ENCODE measurements at regions of chr5 and their contacts with region 1.

Region 1: DNA sequence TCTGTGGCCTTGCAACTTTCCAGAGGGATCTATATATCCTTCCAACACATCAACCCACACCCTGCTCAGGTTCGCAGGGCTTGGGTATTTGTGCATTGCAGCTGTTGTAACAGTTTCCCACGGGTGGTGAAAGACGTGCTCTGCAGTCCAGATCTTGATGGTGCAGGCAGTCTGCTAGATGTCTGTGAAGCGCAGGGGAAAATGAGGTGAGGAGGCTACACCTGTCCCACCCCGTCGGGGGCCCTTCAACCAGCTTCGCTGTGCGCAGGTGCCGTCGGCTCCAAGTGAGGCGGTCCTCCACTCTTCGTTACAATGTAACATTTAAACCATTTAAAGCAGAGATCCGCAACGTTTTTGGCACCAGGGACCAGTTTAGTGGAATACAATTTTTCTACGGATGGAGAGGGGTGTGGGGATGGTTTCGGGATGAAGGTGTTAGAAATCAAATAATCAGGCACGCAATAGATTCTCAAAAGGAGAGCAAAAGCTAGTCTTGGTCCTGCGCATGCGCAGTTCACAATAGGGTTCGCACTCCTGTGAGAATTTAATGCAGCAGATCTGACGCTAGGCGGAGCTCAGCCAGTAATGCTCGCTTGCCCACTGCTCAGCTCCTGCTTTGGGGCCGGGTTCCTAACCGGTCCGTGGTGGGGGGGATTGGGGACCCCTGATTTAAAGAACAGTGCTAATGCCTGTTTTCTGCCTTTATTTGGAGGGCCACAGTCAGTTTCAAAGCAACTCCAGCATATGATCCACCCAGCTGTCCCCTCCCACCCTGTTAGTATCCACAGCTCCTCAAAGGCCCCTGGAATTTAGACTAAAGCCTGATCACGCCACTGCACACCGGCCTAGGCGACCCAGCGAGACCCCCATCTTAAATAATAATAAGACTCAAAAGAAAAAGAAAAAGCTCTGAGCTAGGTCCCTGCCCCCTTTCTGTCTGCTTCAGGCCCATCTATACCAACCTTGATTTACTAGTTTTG is 97.1 kb upstream of the SELENOP start:
- DNase-seq: peak; percentile 89 to 90 (median 89)
- H3K4me3 ChIP-seq: peak overlapping the region; percentile 40 to 56
- H3K4me3 Mint-ChIP-seq: peak overlapping the region; percentile 88 to 97 (median 93)
- H3K27ac ChIP-seq: peak overlapping the region; percentile 44
- H3K27ac Mint-ChIP-seq: peak overlapping the region; percentile 66 to 97 (median 95)
- H3K4me1 ChIP-seq: peaks cover 7% of the 10 kb centered on the region
- H3K4me1 Mint-ChIP-seq: peaks cover 8 to 18% (median 12%) of the 10 kb centered on the region in 4 donors
- H3K27me3 ChIP-seq: no peaks in the 10 kb centered on the region
- H3K27me3 Mint-ChIP-seq: peaks cover 10% of the 10 kb centered on the region in 2 donors

Region 2: GRCh38 chr5:42807722-42808447 is 100.9 kb before region 1 on chr5:
- CTCF ChIA-PET with region 1: no interaction called
- POLR2A ChIA-PET with region 1: no interaction called
- intact Hi-C with region 1: no loop called
- DNase-seq: no peak
- H3K4me3 ChIP-seq: no peak overlapping the region
- H3K4me3 Mint-ChIP-seq: no peak overlapping the region
- H3K27ac ChIP-seq: no peak overlapping the region
- H3K27ac Mint-ChIP-seq: no peak overlapping the region
- H3K4me1 ChIP-seq: no peaks in the 10 kb centered on the region
- H3K4me1 Mint-ChIP-seq: peaks cover 0 to 12% (median 3%) of the 10 kb centered on the region in 4 donors
- H3K27me3 ChIP-seq: no peaks in the 10 kb centered on the region
- H3K27me3 Mint-ChIP-seq: peaks cover 0 to 1% of the 10 kb centered on the region in 2 donors

Region 3: DNA sequence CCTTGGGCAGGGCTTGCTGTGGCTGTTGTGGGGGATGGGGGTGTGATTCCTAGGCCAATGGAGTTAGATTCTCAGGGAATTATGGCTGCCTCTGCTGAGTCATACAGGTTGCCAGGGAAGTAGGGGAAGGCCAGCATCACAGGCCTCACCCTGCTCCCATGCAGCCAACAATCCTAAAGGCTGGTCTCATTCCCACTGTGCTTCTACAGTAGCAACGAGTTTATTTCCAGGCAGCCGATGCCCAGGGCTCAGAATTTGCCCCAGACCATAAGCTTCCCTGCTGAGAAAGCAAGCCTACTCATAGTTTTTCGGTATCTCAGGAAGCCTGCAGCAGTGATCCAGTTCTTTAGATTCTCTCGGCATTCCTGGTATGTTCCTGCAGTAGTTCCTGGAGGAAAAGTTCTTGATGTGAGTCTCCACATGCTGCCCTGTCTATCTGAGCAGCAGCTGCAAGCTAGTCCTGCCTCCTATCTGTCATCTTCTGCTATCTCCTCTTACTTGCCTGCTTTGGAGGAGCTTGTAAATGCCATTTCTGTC is 37.8 kb before region 1 on chr5:
- CTCF ChIA-PET with region 1: no interaction called
- POLR2A ChIA-PET with region 1: no interaction called
- intact Hi-C with region 1: no loop called
- DNase-seq: no peak
- H3K4me3 ChIP-seq: no peak overlapping the region
- H3K4me3 Mint-ChIP-seq: no peak overlapping the region
- H3K27ac ChIP-seq: no peak overlapping the region
- H3K27ac Mint-ChIP-seq: no peak overlapping the region
- H3K4me1 ChIP-seq: peaks cover 7% of the 10 kb centered on the region
- H3K4me1 Mint-ChIP-seq: peaks cover 0 to 7% (median 3%) of the 10 kb centered on the region in 4 donors
- H3K27me3 ChIP-seq: no peaks in the 10 kb centered on the region
- H3K27me3 Mint-ChIP-seq: peaks cover 14 to 22% of the 10 kb centered on the region in 2 donors

Region 4: DNA sequence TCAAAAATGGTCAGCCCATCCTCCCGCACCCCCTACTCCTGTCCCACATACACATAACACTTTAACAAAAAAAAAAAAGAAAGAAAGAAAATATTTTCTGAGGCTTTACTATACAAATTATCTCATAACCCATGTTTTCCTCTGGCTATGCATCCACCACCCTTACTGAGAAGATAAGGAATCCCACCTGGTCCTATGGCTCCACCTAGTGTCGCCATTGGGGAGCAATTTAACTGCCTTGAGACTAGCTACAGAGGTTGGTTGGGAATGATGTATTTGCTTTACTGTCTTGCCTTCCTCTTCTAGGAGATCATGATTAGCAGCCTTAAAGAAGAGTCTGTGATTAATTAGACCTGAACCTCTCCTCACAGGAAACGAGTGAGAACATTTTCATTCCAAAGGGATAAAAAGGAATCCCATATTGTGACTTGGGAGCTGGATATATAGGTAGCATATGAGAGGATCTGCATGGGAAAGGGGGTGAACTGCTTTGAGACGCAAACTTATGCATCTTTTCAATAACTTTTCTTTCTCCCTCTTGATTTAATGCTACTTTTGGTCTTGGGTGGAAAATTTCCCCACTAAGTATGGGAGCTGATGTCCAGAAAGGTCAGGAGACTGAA is 19.4 kb before region 1 on chr5:
- CTCF ChIA-PET with region 1: interaction called, 15 read pairs
- POLR2A ChIA-PET with region 1: interaction called, 4 read pairs
- intact Hi-C with region 1: no loop called
- DNase-seq: peak in 4 of 5 donors; percentile 48 to 54 (median 51)
- H3K4me3 ChIP-seq: no peak overlapping the region
- H3K4me3 Mint-ChIP-seq: no peak overlapping the region
- H3K27ac ChIP-seq: no peak overlapping the region
- H3K27ac Mint-ChIP-seq: no peak overlapping the region
- H3K4me1 ChIP-seq: no peaks in the 10 kb centered on the region
- H3K4me1 Mint-ChIP-seq: no peaks in the 10 kb centered on the region
- H3K27me3 ChIP-seq: no peaks in the 10 kb centered on the region
- H3K27me3 Mint-ChIP-seq: peaks cover 7 to 8% of the 10 kb centered on the region in 2 donors

Region 5: DNA sequence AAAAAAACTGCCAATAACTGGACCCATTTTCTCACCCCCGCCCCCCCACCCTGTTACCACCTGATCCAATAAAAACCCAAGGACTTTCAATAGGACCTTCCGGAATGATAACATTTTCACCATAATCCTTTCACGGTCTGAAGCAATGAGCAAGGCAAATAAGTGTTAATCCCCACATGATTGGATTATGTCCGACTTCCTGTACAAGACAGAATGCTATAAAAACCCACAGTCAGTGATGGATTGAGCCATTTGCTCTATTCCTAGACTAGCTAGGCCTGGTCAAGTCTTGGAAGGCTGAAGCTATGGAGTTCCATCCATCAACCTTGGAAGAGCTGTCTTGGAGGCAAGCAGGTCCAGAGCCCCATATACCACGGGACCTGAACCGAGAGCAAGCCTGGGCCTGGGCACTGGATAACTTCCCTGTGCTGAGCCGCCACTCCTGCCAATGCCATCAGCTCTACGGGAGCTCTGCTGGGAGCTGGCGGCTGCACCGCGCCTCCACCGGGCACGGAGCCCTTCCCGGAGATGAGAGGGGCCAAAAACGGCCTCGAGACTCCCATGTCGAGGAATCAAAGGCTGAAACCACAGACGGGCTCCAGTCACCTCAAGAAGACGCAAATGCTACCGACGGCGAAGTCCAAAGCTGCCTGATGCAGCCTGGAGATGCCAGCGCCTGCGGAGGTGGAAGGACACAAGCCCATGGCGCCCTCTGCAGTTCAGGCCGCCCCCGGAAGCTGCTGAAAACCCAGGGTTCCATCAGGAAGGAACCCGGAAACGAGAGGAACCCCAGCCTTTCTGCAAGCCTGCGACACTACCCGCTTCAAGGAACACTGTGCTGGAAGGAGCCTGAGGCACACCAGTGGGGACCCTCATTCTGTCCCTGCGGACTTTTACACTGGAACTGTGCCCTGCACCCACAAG is 62.1 kb after region 1 on chr5:
- CTCF ChIA-PET with region 1: interaction called, 10 read pairs
- POLR2A ChIA-PET with region 1: no interaction called
- intact Hi-C with region 1: no loop called
- DNase-seq: no peak
- H3K4me3 ChIP-seq: no peak overlapping the region
- H3K4me3 Mint-ChIP-seq: no peak overlapping the region
- H3K27ac ChIP-seq: no peak overlapping the region
- H3K27ac Mint-ChIP-seq: peak overlapping the region in 2 of 7 donors; percentile 35 to 61
- H3K4me1 ChIP-seq: peaks cover 3% of the 10 kb centered on the region
- H3K4me1 Mint-ChIP-seq: peaks cover 5 to 7% (median 6%) of the 10 kb centered on the region in 4 donors
- H3K27me3 ChIP-seq: no peaks in the 10 kb centered on the region
- H3K27me3 Mint-ChIP-seq: no peaks in the 10 kb centered on the region

Region 6: DNA sequence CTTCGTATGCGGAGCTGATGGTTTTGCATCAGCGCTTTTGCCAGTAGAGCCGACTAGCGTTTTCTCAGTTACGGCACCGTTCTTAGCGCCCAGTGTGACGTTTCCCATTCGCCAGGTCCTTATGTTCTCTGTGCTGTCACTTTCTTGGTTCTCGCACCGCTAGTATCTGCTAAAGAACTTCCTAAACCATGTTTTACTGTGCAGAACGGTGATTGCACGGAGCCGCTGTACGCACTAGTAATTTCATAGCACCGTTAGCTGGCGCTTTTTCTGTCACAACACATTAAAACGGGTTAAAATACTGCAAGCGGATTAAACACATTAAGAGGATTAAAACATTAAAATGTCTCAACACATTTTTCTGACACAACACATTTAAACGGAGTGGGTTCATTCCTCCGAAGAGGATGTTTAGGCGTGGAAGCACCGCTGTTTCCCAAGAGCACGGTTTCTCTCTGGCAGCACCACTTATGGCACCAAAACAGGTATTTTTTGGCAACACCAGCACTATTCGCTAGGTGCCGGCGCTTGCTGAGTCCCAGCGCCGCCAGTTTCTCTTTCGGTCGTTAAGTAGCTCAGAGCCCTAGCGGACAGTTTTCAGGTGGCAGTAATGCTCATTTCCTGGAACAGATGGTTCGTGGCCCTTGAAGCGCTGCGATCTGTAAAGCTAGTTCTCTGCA is 111.0 kb after region 1 on chr5:
- CTCF ChIA-PET with region 1: interaction called, 86 read pairs
- POLR2A ChIA-PET with region 1: interaction called, 65 read pairs
- intact Hi-C with region 1: loop called (anchors 1 kb)
- DNase-seq: peak; percentile 84 to 94 (median 91)
- H3K4me3 ChIP-seq: peak overlapping the region; percentile 73 to 83
- H3K4me3 Mint-ChIP-seq: peak overlapping the region; percentile 94 to 99 (median 98)
- H3K27ac ChIP-seq: peak overlapping the region; percentile 94
- H3K27ac Mint-ChIP-seq: peak overlapping the region; percentile 99 to 100 (median 100)
- H3K4me1 ChIP-seq: peaks cover 40% of the 10 kb centered on the region
- H3K4me1 Mint-ChIP-seq: peaks cover 24 to 67% (median 34%) of the 10 kb centered on the region in 4 donors
- H3K27me3 ChIP-seq: no peaks in the 10 kb centered on the region
- H3K27me3 Mint-ChIP-seq: no peaks in the 10 kb centered on the region

Region 7: GRCh38 chr5:43066799-43067741 is 158.3 kb after region 1 on chr5:
- CTCF ChIA-PET with region 1: interaction called, 33 read pairs
- POLR2A ChIA-PET with region 1: interaction called, 96 read pairs
- intact Hi-C with region 1: loop called (anchors 1 kb)
- DNase-seq: peak; percentile 88 to 92 (median 90)
- H3K4me3 ChIP-seq: peak overlapping the region; percentile 97 to 99
- H3K4me3 Mint-ChIP-seq: peak overlapping the region; percentile 97 to 100 (median 98)
- H3K27ac ChIP-seq: peak overlapping the region; percentile 94
- H3K27ac Mint-ChIP-seq: peak overlapping the region; percentile 98 to 100 (median 99)
- H3K4me1 ChIP-seq: peaks cover 46% of the 10 kb centered on the region
- H3K4me1 Mint-ChIP-seq: peaks cover 31 to 59% (median 43%) of the 10 kb centered on the region in 4 donors
- H3K27me3 ChIP-seq: no peaks in the 10 kb centered on the region
- H3K27me3 Mint-ChIP-seq: no peaks in the 10 kb centered on the region

Region 8: DNA sequence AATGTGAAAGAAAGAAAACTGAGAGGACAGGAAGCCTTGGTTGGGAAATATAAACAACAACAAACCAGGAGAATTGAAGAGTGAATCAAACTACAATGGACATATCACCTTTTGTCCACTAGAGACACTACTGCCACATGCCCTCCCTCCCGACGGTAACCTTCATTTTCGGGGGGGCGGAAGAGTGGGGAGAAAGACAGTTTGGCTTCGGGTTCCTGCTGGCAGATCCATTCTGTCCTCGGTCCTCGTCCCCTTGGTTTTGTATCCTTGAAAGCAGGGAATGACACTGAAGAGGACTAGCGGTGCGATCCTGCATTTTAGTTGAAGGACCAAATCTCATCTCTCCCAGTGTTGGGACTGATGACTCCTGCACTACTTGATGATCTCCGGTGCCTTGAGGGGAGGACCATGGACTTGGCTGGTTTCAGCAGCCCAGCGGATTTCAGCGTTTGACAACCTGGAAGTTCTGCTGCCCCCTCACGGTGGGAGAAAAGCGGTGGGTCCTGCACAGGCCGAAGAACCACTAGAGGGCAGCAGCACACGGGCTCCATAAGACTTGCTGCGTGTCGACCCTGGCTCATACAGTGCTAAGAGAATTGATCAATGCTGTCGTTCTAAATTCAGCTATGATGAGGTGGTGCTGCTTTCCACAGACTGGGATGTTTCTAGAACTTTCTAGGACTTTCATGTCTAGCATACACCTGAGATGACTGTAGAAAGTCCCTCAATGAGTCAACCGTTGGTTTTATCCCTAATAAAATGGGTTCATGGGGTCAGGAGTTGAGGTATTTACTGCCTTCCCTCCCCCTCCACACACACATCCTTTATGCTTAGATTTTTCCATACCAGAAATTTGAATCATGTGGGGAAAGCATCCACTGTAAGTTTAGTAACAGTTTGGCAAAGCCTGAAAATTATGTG is 196.8 kb after region 1 on chr5:
- CTCF ChIA-PET with region 1: interaction called, 124 read pairs
- POLR2A ChIA-PET with region 1: interaction called, 10 read pairs
- intact Hi-C with region 1: loop called (anchors 1 kb)
- DNase-seq: peak; percentile 87 to 90 (median 88)
- H3K4me3 ChIP-seq: peak overlapping the region; percentile 62 to 87
- H3K4me3 Mint-ChIP-seq: peak overlapping the region; percentile 85 to 94 (median 88)
- H3K27ac ChIP-seq: peak overlapping the region; percentile 44
- H3K27ac Mint-ChIP-seq: peak overlapping the region; percentile 84 to 94 (median 92)
- H3K4me1 ChIP-seq: peaks cover 43% of the 10 kb centered on the region
- H3K4me1 Mint-ChIP-seq: peaks cover 28 to 45% (median 37%) of the 10 kb centered on the region in 4 donors
- H3K27me3 ChIP-seq: no peaks in the 10 kb centered on the region
- H3K27me3 Mint-ChIP-seq: no peaks in the 10 kb centered on the region

Region 9: DNA sequence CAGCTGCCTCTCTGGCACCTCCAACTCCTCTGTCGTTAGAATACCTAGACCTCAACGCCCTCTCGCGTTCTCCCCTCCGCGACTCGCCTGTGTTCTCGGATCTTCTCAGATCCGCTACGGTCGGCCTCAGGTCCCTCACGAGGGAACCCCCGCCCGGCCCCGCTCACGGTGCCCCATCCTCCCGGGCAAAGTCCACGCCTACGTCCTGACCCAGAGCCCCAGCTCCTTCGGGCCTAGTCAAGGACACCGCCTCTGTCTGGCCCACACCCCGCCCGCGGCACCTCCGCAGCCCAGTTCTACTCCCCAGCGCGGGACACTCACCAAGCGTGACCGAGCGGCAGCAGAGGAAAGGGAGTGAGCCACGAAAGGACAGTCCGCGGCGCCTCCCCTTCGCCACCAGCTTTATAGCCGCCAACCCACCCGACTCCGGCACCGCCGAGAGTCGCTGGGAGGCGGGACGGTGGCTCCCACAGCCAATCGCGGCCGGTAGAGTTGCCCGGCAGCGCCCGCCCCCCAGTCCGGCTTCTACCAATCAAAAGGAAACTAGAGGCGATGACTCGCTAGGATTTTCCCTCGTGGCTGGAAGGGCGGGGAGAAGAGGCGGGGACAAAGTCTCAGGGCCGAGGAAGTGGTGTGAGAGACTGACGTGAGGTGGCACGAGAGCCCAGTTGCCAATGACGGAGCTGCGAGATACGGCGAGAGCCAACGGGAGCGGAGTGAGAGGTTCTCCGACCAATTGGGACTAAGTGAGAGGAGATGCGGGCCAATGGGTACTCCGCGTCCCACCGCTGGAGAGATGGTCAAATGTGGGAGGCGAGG is 404.4 kb after region 1 on chr5 and contains the start of gene HMGCS1:
- CTCF ChIA-PET with region 1: interaction called, 14 read pairs
- POLR2A ChIA-PET with region 1: interaction called, 6 read pairs
- intact Hi-C with region 1: loop called (anchors 2 kb)
- DNase-seq: peak; percentile 99 to 100 (median 99)
- H3K4me3 ChIP-seq: peak within 1 kb of the TSS; percentile 59 to 96
- H3K4me3 Mint-ChIP-seq: peak within 1 kb of the TSS; percentile 95 to 99 (median 98)
- H3K27ac ChIP-seq: peak within 1 kb of the TSS; percentile 95
- H3K27ac Mint-ChIP-seq: peak within 1 kb of the TSS; percentile 78 to 99 (median 98)
- H3K4me1 ChIP-seq: peaks cover 21% of the 10 kb centered on the region
- H3K4me1 Mint-ChIP-seq: peaks cover 19 to 39% (median 25%) of the 10 kb centered on the region in 4 donors
- H3K27me3 ChIP-seq: no peaks in the 10 kb centered on the region
- H3K27me3 Mint-ChIP-seq: no peaks in the 10 kb centered on the region
- total RNA-seq, gene HMGCS1: 27.7 to 35.7 TPM